Activated T-helper 1 cell treated with anti-CD3 and anti-CD28 coated beads, Interleukin-12 subunit alpha, Interleukin-12 subunit beta, Interleukin-2, Interleukin-4 antibody, amounts not matched to agents 30 ng/mL and 10 ng/mL and 1 ng/mL, durations not matched to agents 14 hours and 24 hours and 36 hours (primary cell): ENCODE measurements at regions of chr21 and their contacts with region 1.

Region 1: DNA sequence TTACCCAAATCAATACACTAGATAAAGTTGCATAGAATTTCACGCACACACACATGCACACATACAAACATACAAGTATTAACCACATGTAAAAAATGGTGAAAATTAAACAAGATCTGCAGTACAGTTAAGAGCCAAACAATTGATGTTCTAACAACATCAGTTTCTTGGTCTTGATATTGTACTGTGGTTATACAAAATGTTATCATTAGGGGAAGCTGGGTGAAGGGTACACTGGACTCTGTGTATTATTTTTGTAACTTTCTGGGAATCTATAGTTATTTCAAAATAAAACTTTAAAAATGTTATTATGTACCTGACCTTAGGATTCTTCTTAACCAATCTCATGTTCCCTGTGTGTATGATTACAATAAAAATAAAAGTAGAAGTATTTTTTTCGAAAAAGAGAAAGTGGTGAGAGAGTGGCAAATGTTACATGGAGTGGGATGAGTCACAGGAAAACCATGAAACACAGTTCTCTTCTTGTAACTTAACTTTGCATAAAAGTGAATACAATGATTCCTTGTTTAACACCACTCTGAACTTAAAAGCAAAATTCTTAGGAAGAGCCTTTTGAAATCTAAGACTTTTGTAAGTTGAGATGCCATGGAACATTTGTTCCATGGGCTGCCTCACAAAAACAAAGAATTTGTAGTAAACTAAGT is 101.6 kb upstream of the RUNX1 start:
- DNase-seq: no peak
- H3K4me3 Mint-ChIP-seq: no peak overlapping the region
- H3K27ac Mint-ChIP-seq: peak overlapping the region; percentile 42
- H3K4me1 Mint-ChIP-seq: peaks cover 36% of the 10 kb centered on the region
- H3K27me3 Mint-ChIP-seq: no peaks in the 10 kb centered on the region

Region 2: DNA sequence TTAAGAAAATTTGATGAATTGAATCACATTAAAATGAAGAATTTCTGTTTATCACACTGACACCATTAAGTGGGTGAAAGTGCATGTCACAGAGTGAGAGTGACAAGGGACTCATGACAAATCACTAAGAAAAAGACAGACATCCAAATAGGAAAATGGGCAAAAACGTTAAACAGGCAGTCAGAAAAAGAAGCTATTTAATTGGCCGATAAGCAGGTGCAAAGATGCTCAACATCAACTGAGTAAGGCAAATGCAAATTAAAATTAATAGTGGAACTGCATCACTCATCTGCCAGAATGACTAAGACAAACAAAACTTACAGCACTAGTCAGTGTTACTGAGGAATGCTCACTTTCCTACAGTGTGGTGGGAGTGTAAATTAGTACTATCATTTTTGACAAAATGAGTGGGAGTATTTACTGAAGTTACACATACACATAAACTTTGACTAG is 62.3 kb before region 1 on chr21:
- intact Hi-C with region 1: loop called (anchors 2 kb)
- DNase-seq: no peak
- H3K4me3 Mint-ChIP-seq: no peak overlapping the region
- H3K27ac Mint-ChIP-seq: peak overlapping the region; percentile 89
- H3K4me1 Mint-ChIP-seq: peaks cover 36% of the 10 kb centered on the region
- H3K27me3 Mint-ChIP-seq: no peaks in the 10 kb centered on the region

Region 3: GRCh38 chr21:35138665-35139381 is 11.9 kb before region 1 on chr21:
- intact Hi-C with region 1: loop called (anchors 1 kb)
- DNase-seq: no peak
- H3K4me3 Mint-ChIP-seq: peak overlapping the region; percentile 62
- H3K27ac Mint-ChIP-seq: peak overlapping the region; percentile 93
- H3K4me1 Mint-ChIP-seq: peaks cover 27% of the 10 kb centered on the region
- H3K27me3 Mint-ChIP-seq: no peaks in the 10 kb centered on the region

Region 4: DNA sequence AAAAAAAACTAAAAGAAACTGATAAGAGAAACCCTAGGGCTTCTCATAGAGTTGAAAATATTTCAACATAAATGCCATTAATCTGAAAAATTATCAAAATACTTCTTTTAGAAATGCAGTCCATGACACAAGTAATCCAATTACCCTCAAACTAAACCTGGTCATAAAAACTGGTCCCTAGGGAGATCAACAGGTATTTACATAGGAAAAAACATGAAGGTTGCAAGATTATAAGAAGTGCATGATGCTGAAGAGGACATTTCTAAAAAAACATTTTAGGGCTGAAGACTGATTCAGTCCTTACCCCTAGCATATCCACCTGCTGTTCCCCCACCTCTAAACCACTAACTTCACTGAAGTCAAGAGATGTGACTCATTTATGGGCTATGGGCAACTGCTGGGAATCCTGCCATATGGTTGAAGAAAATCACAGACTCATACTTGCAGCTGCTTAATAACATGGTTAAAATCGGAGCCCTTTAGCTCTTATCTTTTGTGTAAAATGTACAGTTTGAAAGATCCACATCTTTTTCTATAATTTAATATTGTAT is 29.4 kb after region 1 on chr21:
- intact Hi-C with region 1: loop called (anchors 2 kb)
- DNase-seq: no peak
- H3K4me3 Mint-ChIP-seq: no peak overlapping the region
- H3K27ac Mint-ChIP-seq: no peak overlapping the region
- H3K4me1 Mint-ChIP-seq: peaks cover 21% of the 10 kb centered on the region
- H3K27me3 Mint-ChIP-seq: peaks cover 3% of the 10 kb centered on the region

Region 5: GRCh38 chr21:35198031-35198431 is 47.3 kb after region 1 on chr21:
- intact Hi-C with region 1: loop called (anchors 5 kb)
- DNase-seq: no peak
- H3K4me3 Mint-ChIP-seq: no peak overlapping the region
- H3K27ac Mint-ChIP-seq: no peak overlapping the region
- H3K4me1 Mint-ChIP-seq: peaks cover 19% of the 10 kb centered on the region
- H3K27me3 Mint-ChIP-seq: peaks cover 6% of the 10 kb centered on the region

Region 6: GRCh38 chr21:35226948-35227744 is 76.5 kb after region 1 on chr21:
- intact Hi-C with region 1: loop called (anchors 1 kb)
- DNase-seq: peak; percentile 42
- H3K4me3 Mint-ChIP-seq: peak overlapping the region; percentile 27
- H3K27ac Mint-ChIP-seq: peak overlapping the region; percentile 6
- H3K4me1 Mint-ChIP-seq: peaks cover 41% of the 10 kb centered on the region
- H3K27me3 Mint-ChIP-seq: peaks cover 10% of the 10 kb centered on the region

Region 7: DNA sequence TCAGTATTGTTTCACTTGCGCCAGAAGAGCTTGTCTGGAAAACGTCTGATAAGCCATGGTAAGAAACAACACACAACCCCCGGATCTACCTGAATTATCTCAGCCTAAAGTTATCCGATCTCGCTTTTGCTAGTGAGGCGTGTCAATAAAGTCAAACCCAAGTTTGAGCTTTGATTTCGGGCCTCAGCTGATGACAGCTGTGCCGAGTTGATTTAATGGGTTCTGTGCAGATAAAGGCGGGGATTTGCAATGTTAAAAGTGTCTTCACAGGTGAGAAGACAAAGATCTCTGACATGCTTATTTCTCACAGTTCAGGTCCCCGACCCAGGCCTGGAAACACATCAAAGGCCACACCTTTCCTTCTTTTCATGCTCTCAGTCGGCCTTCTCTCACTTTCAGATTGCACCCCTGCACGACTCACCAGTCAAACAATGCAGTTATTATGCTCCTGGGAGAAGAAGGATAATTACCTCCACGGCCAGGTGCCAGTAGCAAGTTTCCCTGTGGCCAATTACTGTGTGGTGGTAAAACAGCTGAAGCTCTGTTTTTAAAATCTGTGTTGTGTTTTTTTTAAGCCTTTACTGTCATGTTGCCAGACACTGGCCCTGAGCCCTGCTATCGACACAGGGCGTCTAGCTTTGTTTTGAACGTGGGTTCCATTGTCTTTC is 143.7 kb after region 1 on chr21:
- intact Hi-C with region 1: no loop called
- DNase-seq: no peak
- H3K4me3 Mint-ChIP-seq: no peak overlapping the region
- H3K27ac Mint-ChIP-seq: no peak overlapping the region
- H3K4me1 Mint-ChIP-seq: peaks cover 13% of the 10 kb centered on the region
- H3K27me3 Mint-ChIP-seq: peaks cover 2% of the 10 kb centered on the region

Region 8: DNA sequence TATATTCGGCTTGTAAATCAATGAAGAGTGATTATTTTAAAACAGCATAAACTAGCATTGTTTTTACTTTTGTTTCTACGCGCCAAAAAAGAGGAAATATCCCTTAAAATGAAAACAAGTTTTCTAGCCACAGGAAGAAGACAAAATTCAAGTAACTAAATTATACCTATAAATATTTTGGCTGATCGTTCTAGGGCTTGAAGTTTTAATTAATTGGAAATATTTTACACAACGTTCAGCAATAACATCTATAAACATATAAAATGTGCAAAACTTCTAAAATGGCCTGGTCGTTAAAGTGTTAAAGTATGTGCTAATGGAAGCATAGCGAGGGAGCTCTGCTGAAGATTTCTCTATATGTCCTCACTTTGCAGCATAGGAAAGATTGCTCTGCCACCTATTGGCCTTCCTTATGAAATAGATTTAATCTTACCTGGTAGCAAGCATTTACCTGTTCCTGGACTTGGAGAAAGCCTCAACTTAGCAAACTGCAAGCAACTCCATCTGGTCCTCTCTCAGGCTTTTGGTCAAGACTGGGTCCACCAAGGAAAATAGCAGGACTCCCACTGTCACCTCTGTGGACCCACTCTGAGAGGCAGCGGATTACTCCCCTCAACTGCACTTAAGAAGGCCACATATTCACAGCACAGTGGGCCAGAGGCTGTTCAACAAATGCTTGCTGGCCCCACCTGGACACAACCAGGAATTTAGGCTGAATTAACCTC is 249.7 kb after region 1 on chr21:
- intact Hi-C with region 1: loop called (anchors 2 kb)
- DNase-seq: peak; percentile 9
- H3K4me3 Mint-ChIP-seq: no peak overlapping the region
- H3K27ac Mint-ChIP-seq: no peak overlapping the region
- H3K4me1 Mint-ChIP-seq: peaks cover 23% of the 10 kb centered on the region
- H3K27me3 Mint-ChIP-seq: no peaks in the 10 kb centered on the region